Stomach (tissue), 19 donors: ENCODE measurements at regions of chr2 and their contacts with region 1.

Region 1: GRCh38 chr2:137910641-137911040 is 53.6 kb upstream of the HNMT start:
- DNase-seq: peak in 1 of 2 donors; percentile 40
- H3K4me3 ChIP-seq: no peak overlapping the region
- H3K27ac ChIP-seq: no peak overlapping the region
- H3K4me1 ChIP-seq: peaks cover 0 to 4% (median 0%) of the 10 kb centered on the region in 4 donors
- H3K27me3 ChIP-seq: no peaks in the 10 kb centered on the region
- CTCF ChIP-seq: peak in 5 of 7 experiments; percentile 20 to 76 (median 34)
- EP300 ChIP-seq: no peak
- POLR2A ChIP-seq: no peak

Region 2: GRCh38 chr2:137654046-137654445 is 256.6 kb before region 1 on chr2:
- intact Hi-C with region 1: no loop called
- DNase-seq: no peak
- H3K4me3 ChIP-seq: no peak overlapping the region
- H3K27ac ChIP-seq: no peak overlapping the region
- H3K4me1 ChIP-seq: no peaks in the 10 kb centered on the region
- H3K27me3 ChIP-seq: no peaks in the 10 kb centered on the region
- CTCF ChIP-seq: no peak
- EP300 ChIP-seq: no peak
- POLR2A ChIP-seq: no peak

Region 3: GRCh38 chr2:138090330-138090729 is 179.7 kb after region 1 on chr2:
- intact Hi-C with region 1: loop called (anchors 10 kb)
- DNase-seq: peak in 1 of 2 donors; percentile 31
- H3K4me3 ChIP-seq: no peak overlapping the region
- H3K27ac ChIP-seq: no peak overlapping the region
- H3K4me1 ChIP-seq: peaks cover 0 to 14% (median 5%) of the 10 kb centered on the region in 4 donors
- H3K27me3 ChIP-seq: no peaks in the 10 kb centered on the region
- CTCF ChIP-seq: peak in 4 of 7 experiments; percentile 13 to 68 (median 47)
- EP300 ChIP-seq: no peak
- POLR2A ChIP-seq: no peak

Region 4: GRCh38 chr2:138298900-138299299 is 388.3 kb after region 1 on chr2:
- intact Hi-C with region 1: no loop called
- DNase-seq: no peak
- H3K4me3 ChIP-seq: no peak overlapping the region
- H3K27ac ChIP-seq: no peak overlapping the region
- H3K4me1 ChIP-seq: no peaks in the 10 kb centered on the region
- H3K27me3 ChIP-seq: no peaks in the 10 kb centered on the region
- CTCF ChIP-seq: no peak
- EP300 ChIP-seq: no peak
- POLR2A ChIP-seq: no peak